Activated CD4-positive, alpha-beta memory T cell treated with anti-CD3 and anti-CD28 coated beads for 36 hours (primary cell): ENCODE measurements at regions of chr6 and their contacts with region 1.

Region 1: DNA sequence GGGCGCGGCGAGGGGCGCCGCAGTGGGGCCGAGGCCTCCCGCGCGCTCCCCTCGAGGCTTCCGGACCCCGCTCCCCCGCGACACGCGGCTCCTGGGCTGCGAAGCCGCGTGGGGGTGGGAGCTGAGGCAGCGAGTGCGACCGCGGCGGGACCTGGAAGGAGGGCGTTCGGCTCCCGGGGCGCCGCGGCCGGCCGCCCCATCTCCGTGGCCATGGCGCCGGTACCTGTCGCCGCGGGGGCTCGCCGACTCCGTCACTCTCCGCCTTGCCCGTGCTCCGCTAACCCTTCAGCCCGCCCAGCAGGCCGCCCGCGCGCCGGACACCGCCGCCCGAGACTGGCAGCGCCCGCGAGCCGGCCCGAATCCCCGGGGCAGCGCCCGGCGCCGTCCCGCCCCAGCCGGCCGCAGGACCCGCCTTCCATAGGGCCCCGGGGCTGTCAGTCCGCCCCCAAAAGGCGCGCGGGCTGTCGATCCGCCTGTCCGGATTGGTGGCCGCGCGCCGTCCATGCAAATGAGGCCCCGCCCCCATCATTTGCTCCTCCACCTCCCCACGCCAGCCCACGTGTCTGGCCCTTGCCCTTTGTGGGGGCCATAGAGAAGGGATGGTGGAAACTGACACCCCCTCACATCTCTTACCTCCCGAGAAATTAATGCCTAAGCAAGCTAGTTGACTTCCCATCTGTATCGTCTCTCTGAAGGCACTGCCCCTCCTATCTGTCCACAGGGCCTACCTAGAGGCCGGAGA is at the start of gene FKBP5:
- DNase-seq: peak; percentile 93
- H3K4me3 Mint-ChIP-seq: peak within 1 kb of the TSS; percentile 92
- H3K27ac Mint-ChIP-seq: peak within 1 kb of the TSS; percentile 86
- H3K4me1 Mint-ChIP-seq: peaks cover 15% of the 10 kb centered on the region
- H3K27me3 Mint-ChIP-seq: no peaks in the 10 kb centered on the region
- total RNA-seq, gene FKBP5: 111 to 112 TPM

Region 2: DNA sequence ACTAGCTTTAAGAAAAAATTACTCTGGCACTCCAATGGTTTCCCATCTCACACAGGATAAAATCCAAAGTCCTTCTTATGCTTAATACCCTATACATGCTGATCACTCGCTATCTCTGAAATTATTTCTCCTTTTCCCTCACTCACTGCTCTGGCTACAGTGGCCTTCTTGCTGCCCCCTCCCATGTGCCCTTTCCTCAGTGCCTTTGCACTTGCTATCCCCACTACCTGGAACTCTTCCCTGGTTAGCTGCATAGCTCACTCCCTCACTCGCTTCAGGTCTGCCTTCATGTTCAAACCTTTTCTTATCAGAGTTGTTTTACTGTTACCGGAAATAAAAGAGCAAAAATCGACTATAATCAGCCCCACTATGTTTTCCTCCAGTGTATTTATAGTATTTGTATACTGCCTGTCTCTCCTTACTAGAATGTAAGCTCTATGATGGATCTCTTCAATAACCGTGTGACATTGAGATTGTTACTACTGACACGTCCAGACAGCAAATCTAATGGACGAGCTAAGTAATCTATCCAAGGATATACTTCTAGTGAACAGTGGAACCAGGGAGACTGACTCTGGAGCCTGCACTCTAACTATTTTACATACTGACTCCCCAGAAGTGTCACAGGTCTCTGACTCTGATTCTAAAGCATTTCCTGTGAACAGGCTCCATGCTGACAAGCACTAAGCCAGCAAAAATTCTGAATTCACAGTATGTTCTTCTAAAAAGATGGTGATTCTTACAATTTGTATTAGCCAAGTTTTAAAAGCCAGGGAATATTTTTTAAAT is 25.1 kb before region 1 on chr6:
- CTCF ChIA-PET with region 1: interaction called, 9 read pairs
- POLR2A ChIA-PET with region 1: interaction called, 5 read pairs
- intact Hi-C with region 1: loop called (anchors 2 kb)
- DNase-seq: no peak
- H3K4me3 Mint-ChIP-seq: no peak overlapping the region
- H3K27ac Mint-ChIP-seq: no peak overlapping the region
- H3K4me1 Mint-ChIP-seq: peaks cover 21% of the 10 kb centered on the region
- H3K27me3 Mint-ChIP-seq: no peaks in the 10 kb centered on the region

Region 3: GRCh38 chr6:35710241-35710847 is 21.6 kb after region 1 on chr6:
- CTCF ChIA-PET with region 1: interaction called, 5 read pairs
- POLR2A ChIA-PET with region 1: interaction called, 6 read pairs
- intact Hi-C with region 1: loop called (anchors 2 kb)
- DNase-seq: peak; percentile 76
- H3K4me3 Mint-ChIP-seq: no peak overlapping the region
- H3K27ac Mint-ChIP-seq: peak overlapping the region; percentile 87
- H3K4me1 Mint-ChIP-seq: peaks cover 23% of the 10 kb centered on the region
- H3K27me3 Mint-ChIP-seq: no peaks in the 10 kb centered on the region

Region 4: GRCh38 chr6:35719830-35720733 is 31.3 kb after region 1 on chr6:
- CTCF ChIA-PET with region 1: interaction called, 6 read pairs
- POLR2A ChIA-PET with region 1: interaction called, 3 read pairs
- intact Hi-C with region 1: loop called (anchors 2 kb)
- DNase-seq: peak; percentile 60
- H3K4me3 Mint-ChIP-seq: peak overlapping the region; percentile 52
- H3K27ac Mint-ChIP-seq: peak overlapping the region; percentile 86
- H3K4me1 Mint-ChIP-seq: peaks cover 71% of the 10 kb centered on the region
- H3K27me3 Mint-ChIP-seq: no peaks in the 10 kb centered on the region